ENCODE measurements at regions of chr6 and their contacts with region 1.

Region 1: DNA sequence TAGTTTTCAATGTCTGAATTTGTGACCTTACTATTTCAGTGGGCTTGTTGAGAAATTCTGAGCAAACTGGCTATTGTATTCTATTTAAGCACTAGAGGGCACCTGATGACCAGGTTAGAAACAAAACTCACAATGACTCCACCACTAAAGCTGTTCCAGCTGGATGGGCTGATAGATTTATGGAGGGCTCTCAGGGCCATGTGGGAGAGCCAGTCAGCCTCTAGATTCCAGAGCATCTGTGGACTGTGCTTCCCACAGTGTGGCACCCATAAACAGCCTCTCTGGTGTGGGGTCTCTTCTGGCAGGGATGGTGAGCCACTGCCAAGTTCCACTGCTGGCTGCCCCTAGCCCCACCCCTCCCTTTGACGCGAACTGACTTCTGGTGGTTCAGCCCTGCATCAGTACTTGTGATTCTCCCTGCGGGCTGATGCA is 29.2 kb downstream of the C6orf58 start:
- DNase-seq: peak; percentile 61
- ATAC-seq: peak; percentile 65
- H3K4me3 ChIP-seq: no peak overlapping the region
- H3K27ac ChIP-seq: no peak overlapping the region
- H3K4me1 ChIP-seq: peaks cover 7% of the 10 kb centered on the region
- H3K27me3 ChIP-seq: no peaks in the 10 kb centered on the region
- CTCF ChIP-seq: peak; percentile 64

Region 2: DNA sequence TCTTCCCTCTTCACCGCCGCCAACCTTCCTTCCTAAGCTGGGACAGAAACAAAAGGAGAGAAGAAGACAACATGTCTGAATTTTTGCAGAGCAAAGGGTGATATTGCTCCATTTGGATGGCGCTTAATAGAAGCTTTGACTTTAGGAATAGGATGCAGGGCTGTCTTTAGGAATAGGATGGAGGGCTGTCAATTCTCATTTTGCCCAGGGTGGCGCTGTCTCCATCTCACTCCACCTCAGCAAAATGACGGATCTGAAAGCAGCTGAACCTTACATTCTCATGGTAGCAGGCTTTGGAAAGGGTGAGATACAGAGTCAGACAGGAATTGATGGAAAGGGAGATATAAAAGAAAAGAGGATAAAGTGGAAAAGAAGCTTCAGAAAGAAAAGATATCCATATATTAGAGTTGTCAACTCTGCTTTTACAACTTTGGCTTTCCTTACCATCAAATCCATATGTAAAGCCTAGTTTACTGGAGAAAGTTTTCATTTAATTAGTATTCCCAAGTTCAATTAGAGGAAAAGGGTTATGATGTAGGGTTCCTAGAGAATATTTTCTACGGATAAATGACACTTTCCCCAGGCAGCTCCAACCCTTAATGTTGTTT is 89.4 kb before region 1 on chr6:
- CTCF ChIA-PET with region 1: no interaction called
- POLR2A ChIA-PET with region 1: no interaction called
- intact Hi-C with region 1: no loop called
- DNase-seq: peak; percentile 56
- ATAC-seq: peak; percentile 74
- H3K4me3 ChIP-seq: peak overlapping the region; percentile 66
- H3K27ac ChIP-seq: no peak overlapping the region
- H3K4me1 ChIP-seq: no peaks in the 10 kb centered on the region
- H3K27me3 ChIP-seq: peaks cover 2% of the 10 kb centered on the region; the same call in 1 of the 2 replicates
- CTCF ChIP-seq: peak; percentile 76

Region 3: DNA sequence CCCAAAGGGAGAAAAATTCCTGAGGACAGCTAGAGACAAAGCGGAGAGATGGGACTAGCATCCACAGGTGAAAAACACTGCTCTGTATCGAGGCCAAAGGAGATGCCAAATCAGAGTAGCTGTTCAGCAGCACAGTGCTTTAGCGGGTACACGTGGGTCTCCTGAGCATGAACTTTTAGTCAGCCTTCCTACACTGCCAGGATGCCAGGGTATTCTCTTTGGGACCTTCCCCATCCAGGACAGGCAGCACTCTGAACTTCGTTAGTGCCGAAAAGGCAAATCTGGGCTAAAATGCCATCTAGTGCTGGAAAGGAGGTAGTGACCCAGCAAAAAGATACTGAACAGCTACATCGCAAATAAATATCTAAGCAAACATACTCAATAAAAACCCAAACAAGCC is 35.8 kb after region 1 on chr6:
- CTCF ChIA-PET with region 1: interaction called, 4 read pairs
- POLR2A ChIA-PET with region 1: no interaction called
- intact Hi-C with region 1: loop called (anchors 1 kb)
- DNase-seq: peak; percentile 64
- ATAC-seq: peak; percentile 70
- H3K4me3 ChIP-seq: no peak overlapping the region
- H3K27ac ChIP-seq: no peak overlapping the region
- H3K4me1 ChIP-seq: no peaks in the 10 kb centered on the region
- H3K27me3 ChIP-seq: no peaks in the 10 kb centered on the region
- CTCF ChIP-seq: peak; percentile 62

Region 4: DNA sequence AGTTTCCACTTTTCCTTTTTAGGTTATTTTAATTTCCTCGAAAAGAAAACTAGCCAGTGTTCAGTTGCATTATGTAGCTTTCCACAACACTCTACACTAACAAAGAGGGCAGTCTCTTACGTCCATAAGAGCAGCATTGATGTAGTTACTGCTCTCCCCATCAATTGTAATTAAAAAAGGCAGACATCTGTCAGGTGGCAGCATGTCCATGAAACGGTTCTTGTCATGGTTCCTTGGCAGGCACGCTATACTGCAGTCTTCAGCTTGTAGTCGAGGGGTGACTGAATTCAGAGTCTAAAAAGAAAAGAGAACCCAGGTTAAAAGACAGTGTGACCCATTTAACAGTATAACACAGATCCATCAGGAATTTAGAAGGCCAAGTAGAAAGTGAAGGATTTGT is 374.8 kb after region 1 on chr6:
- CTCF ChIA-PET with region 1: no interaction called
- POLR2A ChIA-PET with region 1: no interaction called
- intact Hi-C with region 1: no loop called
- DNase-seq: no peak
- ATAC-seq: no peak
- H3K4me3 ChIP-seq: no peak overlapping the region
- H3K27ac ChIP-seq: no peak overlapping the region
- H3K4me1 ChIP-seq: no peaks in the 10 kb centered on the region
- H3K27me3 ChIP-seq: no peaks in the 10 kb centered on the region
- CTCF ChIP-seq: no peak